ENCODE measurements at regions of chr17 and their contacts with region 1.

Region 1: DNA sequence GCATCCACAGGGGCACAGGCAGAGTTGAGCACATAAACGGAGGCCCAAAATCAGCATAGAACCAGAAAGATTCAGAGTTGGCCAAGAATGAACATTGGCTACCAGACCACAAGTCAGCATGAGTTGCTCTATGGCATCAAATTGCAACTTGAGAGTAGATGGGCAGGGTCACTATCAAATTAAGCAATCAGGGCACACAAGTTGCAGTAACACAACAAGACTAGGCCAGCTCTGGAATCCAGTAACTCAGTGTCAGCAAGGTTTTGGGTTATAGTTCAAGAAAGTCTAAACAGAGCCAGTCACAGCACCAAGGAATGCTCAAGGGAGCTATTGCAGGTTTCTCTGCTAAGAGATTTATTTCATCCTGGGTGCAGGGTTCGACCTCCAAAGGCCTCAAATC is 12.9 kb downstream of the G6PC1 start:
- DNase-seq: no peak
- ATAC-seq: peak in 1 of 2 donors; percentile 87

Region 2: GRCh38 chr17:42878123-42878880 is 35.2 kb before region 1 on chr17:
- intact Hi-C with region 1: loop called in 1 of 2 experiments (anchors 5 kb)
- DNase-seq: no peak
- ATAC-seq: no peak

Measured in left cardiac atrium (tissue), 4 donors.